BJ (cell line): ENCODE measurements at regions of chr1 and their contacts with region 1.

Region 1: GRCh38 chr1:161153679-161154426 is at the start of gene UFC1:
- DNase-seq: peak; percentile 60
- H3K4me3 ChIP-seq: peak within 1 kb of the TSS; percentile 72
- H3K27me3 ChIP-seq: no peaks in the 10 kb centered on the region
- CTCF ChIP-seq: no peak
- polyA plus RNA-seq, gene UFC1: 89.4 and 134 TPM in 2 replicates

Region 2: DNA sequence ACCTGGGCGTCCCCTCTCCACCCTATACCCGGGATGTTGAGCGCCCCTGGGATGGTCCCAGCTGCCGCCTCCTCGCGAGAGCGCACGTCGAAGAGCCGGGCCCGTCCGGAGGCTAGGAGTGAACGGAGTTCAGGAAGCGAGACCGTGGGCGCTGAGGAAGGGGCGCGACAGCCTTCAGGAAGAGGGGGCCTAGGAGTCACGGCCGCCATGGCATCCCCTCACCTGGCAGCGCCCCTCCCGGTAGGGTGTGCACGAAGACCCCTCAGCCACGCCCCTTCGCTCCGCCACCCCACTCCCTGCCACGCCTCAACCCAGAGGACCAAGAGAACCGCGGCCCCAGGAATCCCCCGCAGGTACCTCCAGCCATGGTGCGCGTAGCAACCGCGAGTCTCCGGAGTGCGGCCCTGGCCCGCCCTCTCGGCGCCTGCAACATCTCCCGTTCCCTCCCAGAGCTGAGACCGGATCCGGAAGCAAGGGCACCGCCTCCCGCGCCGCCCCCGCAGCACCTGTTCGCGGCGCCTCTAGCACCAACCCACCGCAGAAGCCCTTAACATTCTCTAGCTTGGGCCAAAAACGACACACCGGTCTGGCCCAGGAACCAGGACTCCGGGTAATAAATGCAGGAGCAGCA is 115.2 kb before region 1 on chr1 and contains the start of gene TSTD1:
- CTCF ChIA-PET with region 1: no interaction called
- POLR2A ChIA-PET with region 1: interaction called, 11 read pairs
- DNase-seq: no peak
- H3K4me3 ChIP-seq: no peak within 1 kb of the TSS
- H3K27me3 ChIP-seq: no peaks in the 10 kb centered on the region
- CTCF ChIP-seq: no peak
- polyA plus RNA-seq, gene TSTD1: 0.22 and 0.26 TPM in 2 replicates

Region 3: GRCh38 chr1:161139765-161140164 is 14.1 kb before region 1 on chr1:
- CTCF ChIA-PET with region 1: interaction called, 10 read pairs
- POLR2A ChIA-PET with region 1: interaction called, 4 read pairs
- DNase-seq: no peak
- H3K4me3 ChIP-seq: no peak overlapping the region
- H3K27me3 ChIP-seq: no peaks in the 10 kb centered on the region
- CTCF ChIP-seq: peak; percentile 63